ENCODE measurements at regions of chr10 and their contacts with region 1.

Region 1: GRCh38 chr10:79195091-79195923 is 126.5 kb downstream of the ZMIZ1 start:
- DNase-seq: peak; percentile 77 to 86
- ATAC-seq: peak; percentile 77 to 86
- H3K4me3 ChIP-seq: no peak overlapping the region
- H3K27ac ChIP-seq: peak overlapping the region; percentile 51 to 76 (median 57)
- H3K4me1 ChIP-seq: peaks cover 25 to 31% of the 10 kb centered on the region in 2 donors
- H3K27me3 ChIP-seq: no peaks in the 10 kb centered on the region
- CTCF ChIP-seq: peak; percentile 90 to 96 (median 96)
- POLR2A ChIP-seq: no peak

Region 2: DNA sequence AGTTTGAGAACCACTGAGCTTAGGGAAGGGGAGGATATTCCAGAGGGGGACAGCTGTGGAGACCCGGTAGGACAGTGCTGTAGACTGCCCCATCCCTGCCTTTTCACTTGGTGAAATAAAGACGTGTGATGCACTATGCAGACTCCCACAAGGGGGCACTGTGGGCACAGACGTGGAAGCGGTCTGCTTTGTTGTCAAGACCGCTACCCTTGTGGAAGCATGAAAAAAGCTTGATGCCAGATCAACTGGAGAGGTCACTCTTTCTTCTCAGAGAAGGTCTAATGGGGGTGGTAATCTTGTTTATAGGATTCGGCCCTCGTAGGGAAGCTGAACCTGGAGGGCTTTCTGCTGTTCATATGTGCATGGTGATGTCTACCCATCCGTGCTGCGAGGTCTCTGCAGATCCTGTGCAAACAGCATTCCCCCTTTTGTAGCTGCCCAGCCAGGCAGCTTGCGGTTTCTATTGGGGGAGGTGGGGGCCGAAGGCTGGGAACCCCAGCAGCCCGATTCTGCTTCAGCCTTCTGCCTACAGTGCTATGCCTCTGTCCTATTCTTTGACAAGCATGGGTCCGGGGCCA is 1147.9 kb before region 1 on chr10:
- in situ Hi-C with region 1: loop called (anchors 10 to 25 kb)
- intact Hi-C with region 1: loop called (anchors 5 kb)
- DNase-seq: peak; percentile 57 to 72
- ATAC-seq: peak; percentile 87 to 91
- H3K4me3 ChIP-seq: no peak overlapping the region
- H3K27ac ChIP-seq: no peak overlapping the region
- H3K4me1 ChIP-seq: peaks cover 6 to 10% of the 10 kb centered on the region in 2 donors
- H3K27me3 ChIP-seq: no peaks in the 10 kb centered on the region
- CTCF ChIP-seq: peak; percentile 78 to 89 (median 82)
- POLR2A ChIP-seq: no peak

Region 3: DNA sequence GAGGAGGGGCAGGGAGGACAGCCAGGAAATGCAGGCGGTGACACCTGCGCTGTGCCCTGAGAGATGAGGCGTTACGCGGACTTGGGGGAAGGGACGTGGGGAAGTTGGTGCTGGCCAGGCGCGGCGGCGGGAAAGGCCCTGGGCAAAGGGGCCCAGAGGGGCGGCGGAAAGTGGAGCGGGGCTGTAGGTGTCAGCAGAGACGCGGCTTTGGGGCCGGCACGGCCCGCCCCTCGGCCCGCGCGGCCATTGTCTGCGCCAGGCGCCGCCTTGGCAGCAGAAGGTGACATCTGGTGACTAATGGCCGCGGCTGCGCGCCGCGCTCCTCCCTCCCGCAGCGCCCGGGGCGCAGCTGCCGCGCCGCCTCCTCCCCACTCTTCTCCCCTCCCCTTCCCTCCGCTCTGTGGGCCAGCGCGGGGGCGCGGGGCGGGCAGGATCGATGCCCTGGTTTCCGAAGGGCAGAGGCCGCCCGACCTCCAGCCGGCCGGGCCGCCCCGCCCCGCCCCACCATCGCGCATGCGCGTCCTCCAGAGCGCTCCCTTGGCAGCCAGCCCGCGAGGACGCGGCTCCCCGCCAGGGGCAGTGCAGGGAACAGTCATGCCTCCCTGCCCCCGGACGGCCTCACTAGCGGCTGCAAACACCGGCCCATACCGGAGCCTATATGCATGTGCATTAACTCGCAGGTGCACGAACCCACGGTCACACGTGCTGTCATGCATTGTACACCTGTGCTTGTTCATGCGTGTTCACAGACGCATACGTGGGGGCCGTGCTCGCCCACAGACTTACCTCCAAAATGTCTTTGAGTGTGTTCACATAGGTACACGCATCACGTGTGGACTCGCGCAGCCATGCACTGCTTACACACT is 892.1 kb before region 1 on chr10:
- in situ Hi-C with region 1: loop called in 1 of 4 experiments (anchors 10 kb)
- intact Hi-C with region 1: loop called (anchors 2 kb)
- DNase-seq: peak; percentile 79 to 90
- ATAC-seq: peak; percentile 83 to 87
- H3K4me3 ChIP-seq: peak overlapping the region; percentile 53 to 73 (median 62)
- H3K27ac ChIP-seq: peak overlapping the region; percentile 87 to 94 (median 90)
- H3K4me1 ChIP-seq: peaks cover 13 to 20% of the 10 kb centered on the region in 2 donors
- H3K27me3 ChIP-seq: no peaks in the 10 kb centered on the region
- CTCF ChIP-seq: peak; percentile 65 to 82 (median 77)
- POLR2A ChIP-seq: peak; percentile 63 to 81

Region 4: DNA sequence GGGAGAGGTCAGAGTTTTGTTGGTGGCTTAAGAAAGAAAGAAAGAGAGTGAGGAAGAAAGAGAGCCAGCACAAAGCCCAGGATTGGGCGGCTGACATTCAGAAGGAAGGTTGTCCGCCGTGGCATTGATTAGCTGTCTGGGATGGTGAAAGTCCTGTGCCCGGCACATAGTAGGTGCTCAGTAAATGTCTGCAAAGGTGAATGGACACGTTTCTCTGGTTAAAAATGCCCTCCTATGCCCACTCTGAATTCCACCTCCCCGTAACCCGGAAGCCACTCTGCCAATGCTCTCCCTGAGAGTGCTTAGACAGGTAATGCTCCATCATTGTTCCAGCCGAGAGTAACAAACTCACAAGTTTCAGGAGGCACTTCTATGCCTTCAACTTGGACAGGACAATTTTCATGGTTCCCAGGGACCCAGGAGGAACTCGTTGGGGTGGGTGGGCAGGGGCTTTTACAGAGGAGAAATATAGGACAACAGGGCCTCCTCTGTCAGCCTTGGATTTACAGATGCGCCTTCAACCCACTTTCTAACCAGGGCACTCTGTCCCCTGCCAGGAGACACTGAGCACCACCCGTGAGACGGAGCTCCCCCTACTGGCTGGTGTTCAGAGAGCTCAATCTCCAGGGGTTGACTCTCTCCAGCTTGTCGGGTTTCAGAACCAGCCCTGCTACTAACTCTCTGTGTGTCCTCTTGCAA is 538.0 kb before region 1 on chr10:
- in situ Hi-C with region 1: loop called in 2 of 4 experiments (anchors 25 kb)
- intact Hi-C with region 1: loop called (anchors 10 kb)
- DNase-seq: peak; percentile 60 to 74
- ATAC-seq: peak; percentile 94 to 96
- H3K4me3 ChIP-seq: no peak overlapping the region
- H3K27ac ChIP-seq: no peak overlapping the region
- H3K4me1 ChIP-seq: no peaks in the 10 kb centered on the region
- H3K27me3 ChIP-seq: no peaks in the 10 kb centered on the region
- CTCF ChIP-seq: peak; percentile 32 to 79 (median 57)
- POLR2A ChIP-seq: no peak

Region 5: DNA sequence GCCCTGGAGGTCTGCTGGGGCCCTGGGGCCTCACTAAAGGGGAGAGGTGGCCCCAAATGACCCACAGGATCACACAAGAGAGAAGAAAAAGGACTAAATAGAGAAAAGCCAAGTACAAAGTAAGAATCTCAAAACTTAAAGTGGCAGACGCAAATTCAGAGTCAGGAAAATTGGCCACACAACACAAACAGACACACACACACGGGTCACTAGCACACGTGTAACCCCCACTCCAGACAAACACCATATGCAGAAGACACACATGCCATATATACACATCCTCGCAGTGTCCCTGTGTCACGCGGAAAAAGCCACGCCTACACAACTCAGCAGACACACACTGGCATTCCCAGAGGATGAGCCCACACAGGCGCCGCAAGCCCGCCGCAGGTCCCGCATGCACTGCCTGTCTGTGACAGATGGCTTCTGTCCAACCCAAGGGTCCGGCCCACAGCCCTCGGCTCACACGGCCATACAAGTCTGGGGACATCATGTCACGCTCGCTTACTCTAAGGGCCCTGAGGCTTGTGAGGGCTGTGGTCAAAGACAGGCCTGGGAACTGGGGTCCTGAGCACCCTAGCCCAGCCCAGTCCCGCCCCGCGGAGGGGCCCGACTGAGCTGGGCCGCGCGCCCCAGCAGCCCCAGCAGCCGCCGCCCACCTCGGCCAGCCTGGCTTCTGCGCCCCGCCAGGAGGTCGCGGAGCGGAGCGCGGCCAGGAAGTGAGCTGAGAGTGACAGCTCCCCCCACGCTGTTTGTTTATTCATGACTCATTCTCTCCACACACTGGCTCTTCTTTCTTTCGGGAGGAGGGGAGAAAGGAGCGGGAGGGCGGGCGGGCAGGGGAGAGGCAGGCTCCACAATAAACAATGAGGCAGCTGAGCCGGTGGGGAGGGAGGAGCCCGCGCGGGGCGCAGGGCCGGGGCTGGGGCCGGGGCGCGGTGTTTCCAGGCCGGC is 222.1 kb before region 1 on chr10:
- in situ Hi-C with region 1: loop called in 1 of 4 experiments (anchors 25 kb)
- intact Hi-C with region 1: loop called (anchors 5 kb)
- DNase-seq: peak; percentile 84 to 91
- ATAC-seq: peak; percentile 77 to 80
- H3K4me3 ChIP-seq: peak overlapping the region; percentile 40 to 72 (median 58)
- H3K27ac ChIP-seq: peak overlapping the region; percentile 97 to 100 (median 98)
- H3K4me1 ChIP-seq: peaks cover 28 to 30% of the 10 kb centered on the region in 2 donors
- H3K27me3 ChIP-seq: no peaks in the 10 kb centered on the region
- CTCF ChIP-seq: no peak
- POLR2A ChIP-seq: peak; percentile 76 to 83

Region 6: GRCh38 chr10:79116801-79117723 is 78.2 kb before region 1 on chr10:
- in situ Hi-C with region 1: no loop called
- intact Hi-C with region 1: loop called (anchors 10 kb)
- DNase-seq: peak; percentile 60 to 62
- ATAC-seq: peak in 1 of 2 donors; percentile 10
- H3K4me3 ChIP-seq: no peak overlapping the region
- H3K27ac ChIP-seq: peak overlapping the region; percentile 10 to 38 (median 30)
- H3K4me1 ChIP-seq: peaks cover 59 to 65% of the 10 kb centered on the region in 2 donors
- H3K27me3 ChIP-seq: no peaks in the 10 kb centered on the region
- CTCF ChIP-seq: no peak
- POLR2A ChIP-seq: no peak

Region 7: DNA sequence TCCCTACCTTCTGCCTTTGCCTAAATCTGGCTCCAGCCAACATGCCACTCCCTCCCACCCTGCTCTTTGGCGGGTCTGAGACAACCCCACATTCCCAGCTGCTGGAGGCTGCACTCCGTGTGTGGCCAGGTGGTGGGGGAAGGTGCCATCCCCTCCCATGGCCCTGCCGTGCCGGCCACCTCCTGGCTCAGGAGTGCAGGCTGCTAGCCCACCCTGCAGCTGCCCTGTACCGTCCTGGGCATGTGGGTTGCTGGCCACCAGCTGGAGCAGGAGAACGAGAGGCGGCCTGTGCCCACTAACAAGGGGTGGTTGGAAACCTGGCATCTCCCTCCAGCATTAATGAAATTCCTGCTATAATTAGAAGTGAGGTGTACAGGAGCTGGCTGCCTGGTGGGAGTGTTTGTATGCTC is 29.0 kb before region 1 on chr10:
- in situ Hi-C with region 1: no loop called
- intact Hi-C with region 1: loop called (anchors 2 kb)
- DNase-seq: peak in 1 of 2 donors; percentile 43
- ATAC-seq: peak; percentile 60 to 75
- H3K4me3 ChIP-seq: no peak overlapping the region
- H3K27ac ChIP-seq: peak overlapping the region; percentile 57 to 75 (median 62)
- H3K4me1 ChIP-seq: peaks cover 34 to 52% of the 10 kb centered on the region in 2 donors
- H3K27me3 ChIP-seq: no peaks in the 10 kb centered on the region
- CTCF ChIP-seq: no peak
- POLR2A ChIP-seq: no peak